Testis (tissue), 5 donors: ENCODE measurements at regions of chr3 and their contacts with region 1.

Region 1: DNA sequence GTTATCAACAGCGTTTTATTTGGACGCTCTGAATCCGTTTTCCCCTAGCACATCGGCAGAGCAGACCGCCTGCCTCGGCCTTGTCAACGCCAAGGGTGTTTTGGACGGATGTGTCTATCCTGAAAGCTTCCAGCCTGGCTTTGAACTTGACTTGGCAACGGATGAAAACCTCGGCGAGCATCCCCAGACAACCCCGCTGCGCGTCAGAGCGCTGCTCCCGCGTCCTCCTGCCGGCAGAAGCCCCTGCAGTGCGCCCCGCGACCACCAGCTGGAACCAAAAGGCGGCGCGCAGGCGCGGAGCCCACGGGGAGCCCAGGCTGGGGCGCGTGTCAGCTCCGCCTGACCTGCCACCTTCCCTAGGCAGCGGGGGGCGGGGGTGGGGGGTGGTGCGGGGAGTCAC is 26.2 kb upstream of the ARL8B start:
- DNase-seq: peak; percentile 26
- H3K4me3 ChIP-seq: peak overlapping the region; percentile 24 to 32
- H3K27ac ChIP-seq: no peak overlapping the region
- H3K4me1 ChIP-seq: peaks cover 9% of the 10 kb centered on the region
- H3K27me3 ChIP-seq: no peaks in the 10 kb centered on the region
- CTCF ChIP-seq: no peak
- POLR2A ChIP-seq: no peak

Region 2: DNA sequence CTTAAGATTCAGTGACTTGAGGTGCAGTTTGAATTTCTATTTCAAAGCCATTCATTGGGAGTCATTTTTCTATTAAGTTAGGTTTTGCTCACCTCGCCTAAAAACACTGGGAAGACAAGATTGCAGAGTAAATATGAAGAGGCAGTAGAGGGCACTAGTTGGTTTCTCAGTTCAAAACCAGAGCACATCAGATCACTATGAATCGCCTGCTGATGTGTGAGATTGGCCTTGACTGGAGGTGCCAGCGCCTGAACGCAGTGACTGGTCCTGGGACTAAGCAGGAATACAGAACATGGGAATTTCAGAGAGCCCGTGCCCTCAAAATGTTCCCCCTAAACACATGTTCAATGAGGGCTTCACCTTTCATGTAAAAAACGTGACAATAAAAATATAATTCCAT is 373.8 kb before region 1 on chr3:
- intact Hi-C with region 1: no loop called
- DNase-seq: peak; percentile 69
- H3K4me3 ChIP-seq: no peak overlapping the region
- H3K27ac ChIP-seq: peak overlapping the region; percentile 23 to 58
- H3K4me1 ChIP-seq: peaks cover 41% of the 10 kb centered on the region
- H3K27me3 ChIP-seq: no peaks in the 10 kb centered on the region
- CTCF ChIP-seq: peak in 2 of 3 experiments; percentile 36 to 44
- POLR2A ChIP-seq: no peak

Region 3: DNA sequence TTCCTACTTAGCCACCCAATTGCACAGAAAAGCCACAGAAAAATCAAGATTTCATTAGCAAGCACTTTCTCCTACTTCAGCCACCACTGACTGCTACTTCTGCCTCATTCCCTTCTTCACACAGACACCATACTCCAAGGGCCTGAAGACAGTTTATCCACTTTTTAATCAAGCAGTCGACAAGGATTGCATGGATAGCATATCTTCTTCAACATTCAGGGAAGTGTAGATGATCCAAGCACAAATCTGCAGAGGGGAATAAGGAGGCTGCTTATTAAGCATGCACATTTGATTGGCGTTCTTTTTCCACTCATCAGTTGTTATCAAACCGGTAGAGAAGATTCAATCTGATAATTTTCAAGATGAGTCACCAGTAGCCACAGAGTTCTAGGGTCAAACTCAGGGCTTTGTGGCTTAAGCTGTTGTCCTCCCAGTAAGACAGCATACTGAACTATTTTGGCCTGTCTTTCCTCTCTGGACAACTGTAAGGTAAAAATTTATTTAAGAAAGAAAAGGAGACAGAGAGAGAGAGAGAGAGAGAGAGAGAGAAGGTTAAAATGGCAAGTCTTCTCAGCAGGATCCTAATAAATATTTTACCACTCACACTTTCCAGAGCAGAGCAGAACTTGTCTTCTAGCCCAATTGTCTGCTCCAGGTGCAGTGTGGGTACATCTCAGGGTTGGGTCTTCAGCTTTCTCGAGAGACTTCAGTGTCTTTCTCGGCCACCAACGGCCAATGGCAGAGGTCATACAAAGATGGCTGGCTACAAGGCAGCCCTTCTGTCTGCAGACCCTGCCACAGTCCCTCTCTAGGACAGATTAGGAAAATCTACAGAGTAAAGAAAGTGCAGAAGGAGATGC is 197.2 kb before region 1 on chr3:
- intact Hi-C with region 1: loop called (anchors 5 kb)
- DNase-seq: no peak
- H3K4me3 ChIP-seq: no peak overlapping the region
- H3K27ac ChIP-seq: peak overlapping the region in 1 of 2 donors; percentile 80
- H3K4me1 ChIP-seq: peaks cover 17% of the 10 kb centered on the region
- H3K27me3 ChIP-seq: no peaks in the 10 kb centered on the region
- CTCF ChIP-seq: no peak
- POLR2A ChIP-seq: no peak

Region 4: GRCh38 chr3:5675319-5675718 is 579.4 kb after region 1 on chr3:
- intact Hi-C with region 1: no loop called
- DNase-seq: no peak
- H3K4me3 ChIP-seq: no peak overlapping the region
- H3K27ac ChIP-seq: no peak overlapping the region
- H3K4me1 ChIP-seq: no peaks in the 10 kb centered on the region
- H3K27me3 ChIP-seq: no peaks in the 10 kb centered on the region
- CTCF ChIP-seq: no peak
- POLR2A ChIP-seq: no peak